Dendritic cell treated with granulocyte-macrophage colony-stimulating factor and Interleukin-4, amounts not matched to agents 40 ng/mL and 50 ng/mL, for 4 days (primary cell): ENCODE measurements at regions of chr9 and their contacts with region 1.

Region 1: GRCh38 chr9:36728651-36729520 is 156.2 kb downstream of the MELK start:
- H3K4me3 Mint-ChIP-seq: no peak overlapping the region
- H3K27ac Mint-ChIP-seq: no peak overlapping the region
- H3K4me1 Mint-ChIP-seq: peaks cover 8% of the 10 kb centered on the region
- H3K27me3 Mint-ChIP-seq: no peaks in the 10 kb centered on the region

Region 2: DNA sequence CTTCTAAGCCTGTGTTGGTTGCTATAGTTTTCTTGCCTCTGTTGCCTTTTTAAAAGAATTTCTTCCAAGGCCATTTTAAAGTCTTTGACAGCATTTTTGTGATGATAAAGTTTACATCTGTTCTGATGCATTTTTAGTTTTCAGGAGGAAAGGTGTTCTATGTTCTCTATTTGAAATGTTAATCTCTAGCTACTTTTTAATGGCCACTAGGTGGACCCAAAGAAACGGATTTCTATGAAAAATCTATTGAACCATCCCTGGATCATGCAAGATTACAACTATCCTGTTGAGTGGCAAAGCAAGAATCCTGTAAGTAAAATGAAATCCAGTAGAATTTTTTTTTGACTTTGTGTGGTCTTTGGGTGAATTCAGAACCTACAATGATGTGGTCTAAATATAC is 96.0 kb before region 1 on chr9:
- intact Hi-C with region 1: loop called (anchors 1 kb)
- H3K4me3 Mint-ChIP-seq: no peak overlapping the region
- H3K27ac Mint-ChIP-seq: no peak overlapping the region
- H3K4me1 Mint-ChIP-seq: no peaks in the 10 kb centered on the region
- H3K27me3 Mint-ChIP-seq: no peaks in the 10 kb centered on the region